Breast epithelium (tissue), 4 donors: ENCODE measurements at regions of chr6 and their contacts with region 1.

Region 1: DNA sequence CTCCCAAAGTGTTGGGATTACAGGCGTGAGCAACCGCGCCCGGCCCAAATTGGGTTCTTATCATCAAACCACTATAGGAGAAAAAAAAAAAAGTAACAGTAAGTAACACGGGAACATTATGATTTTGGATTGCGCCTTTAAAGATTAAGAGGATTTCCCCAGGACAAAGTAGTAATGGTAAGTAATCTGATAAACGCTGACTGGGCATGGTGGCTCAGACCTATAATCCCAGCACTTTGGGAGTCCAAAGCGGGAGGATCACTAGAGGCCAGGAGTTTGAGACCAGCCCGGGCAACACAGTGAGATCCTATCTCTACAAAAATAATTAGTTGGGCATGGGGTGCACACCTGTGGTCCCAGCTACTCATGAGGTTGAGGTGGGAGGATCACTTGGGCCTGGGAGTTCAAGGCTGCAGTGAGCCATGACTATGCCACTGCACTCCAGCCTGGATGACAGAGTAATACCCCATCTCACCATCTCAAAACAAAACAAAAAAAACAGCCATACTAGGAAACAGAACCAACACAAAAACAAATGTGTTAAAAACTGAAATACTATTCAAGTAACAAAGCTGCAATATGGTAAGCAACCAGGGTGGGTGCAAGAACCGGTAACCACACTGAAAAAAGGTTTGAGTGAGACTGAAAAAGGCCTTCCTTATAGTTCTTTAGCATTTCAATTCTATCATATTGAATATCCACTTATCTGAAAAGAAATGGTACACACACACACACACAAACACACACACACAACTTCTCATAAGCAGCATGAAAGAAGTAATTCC is 8.2 kb downstream of the C6orf62 start:
- DNase-seq: no peak
- H3K4me3 ChIP-seq: no peak overlapping the region
- H3K27ac ChIP-seq: no peak overlapping the region
- H3K4me1 ChIP-seq: peaks cover 0 to 14% of the 10 kb centered on the region in 2 donors
- H3K27me3 ChIP-seq: no peaks in the 10 kb centered on the region
- CTCF ChIP-seq: no peak
- POLR2A ChIP-seq: no peak

Region 2: DNA sequence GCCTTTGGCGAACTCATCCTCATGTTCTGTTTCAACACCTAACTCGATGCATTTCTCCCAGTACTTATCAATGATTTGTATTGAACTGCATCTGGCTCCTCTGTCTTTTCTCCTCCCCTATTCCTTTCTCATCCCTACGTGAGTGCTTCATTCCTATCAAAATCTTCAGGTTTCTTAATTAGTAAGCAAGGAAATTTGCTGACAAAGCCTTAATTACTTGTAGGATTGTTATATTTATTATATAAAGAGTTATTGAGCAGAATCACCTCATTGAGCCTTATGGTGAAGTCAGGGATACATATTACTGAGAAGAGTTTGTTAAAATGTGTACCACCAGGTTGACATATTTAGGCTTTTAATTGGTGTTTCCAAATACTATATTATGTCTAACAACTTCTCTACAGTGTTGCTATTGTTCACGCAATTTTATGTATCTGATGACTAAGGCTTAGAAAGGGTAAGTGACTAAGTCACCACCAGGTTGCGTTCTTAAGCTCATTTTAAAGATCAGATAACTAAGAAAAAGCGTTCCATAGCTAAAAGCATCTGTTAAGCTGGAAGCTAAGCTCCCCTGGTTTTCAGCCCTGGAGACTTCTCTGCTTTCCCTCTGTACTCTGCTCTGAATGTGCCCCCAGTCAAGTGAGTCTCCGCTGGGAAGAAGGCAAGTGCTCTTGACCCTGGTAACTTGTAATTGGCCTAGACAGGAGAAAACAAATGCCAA is 960.2 kb after region 1 on chr6:
- intact Hi-C with region 1: loop called (anchors 5 kb)
- DNase-seq: no peak
- H3K4me3 ChIP-seq: no peak overlapping the region
- H3K27ac ChIP-seq: no peak overlapping the region
- H3K4me1 ChIP-seq: no peaks in the 10 kb centered on the region
- H3K27me3 ChIP-seq: no peaks in the 10 kb centered on the region
- CTCF ChIP-seq: no peak
- POLR2A ChIP-seq: no peak